ENCODE measurements at regions of chr12 and their contacts with region 1.

Region 1: GRCh38 chr12:119780786-119781434 is 96.2 kb downstream of the CIT start:
- DNase-seq: no peak
- CTCF ChIP-seq: peak; percentile 35

Region 2: GRCh38 chr12:119791453-119791852 is 10.5 kb after region 1 on chr12:
- CTCF ChIA-PET with region 1: interaction called, 31 read pairs
- POLR2A ChIA-PET with region 1: no interaction called
- DNase-seq: no peak
- CTCF ChIP-seq: no peak

Measured in GM10248 (cell line).